Breast epithelium (tissue), 4 donors: ENCODE measurements at regions of chr17 and their contacts with region 1.

Region 1: DNA sequence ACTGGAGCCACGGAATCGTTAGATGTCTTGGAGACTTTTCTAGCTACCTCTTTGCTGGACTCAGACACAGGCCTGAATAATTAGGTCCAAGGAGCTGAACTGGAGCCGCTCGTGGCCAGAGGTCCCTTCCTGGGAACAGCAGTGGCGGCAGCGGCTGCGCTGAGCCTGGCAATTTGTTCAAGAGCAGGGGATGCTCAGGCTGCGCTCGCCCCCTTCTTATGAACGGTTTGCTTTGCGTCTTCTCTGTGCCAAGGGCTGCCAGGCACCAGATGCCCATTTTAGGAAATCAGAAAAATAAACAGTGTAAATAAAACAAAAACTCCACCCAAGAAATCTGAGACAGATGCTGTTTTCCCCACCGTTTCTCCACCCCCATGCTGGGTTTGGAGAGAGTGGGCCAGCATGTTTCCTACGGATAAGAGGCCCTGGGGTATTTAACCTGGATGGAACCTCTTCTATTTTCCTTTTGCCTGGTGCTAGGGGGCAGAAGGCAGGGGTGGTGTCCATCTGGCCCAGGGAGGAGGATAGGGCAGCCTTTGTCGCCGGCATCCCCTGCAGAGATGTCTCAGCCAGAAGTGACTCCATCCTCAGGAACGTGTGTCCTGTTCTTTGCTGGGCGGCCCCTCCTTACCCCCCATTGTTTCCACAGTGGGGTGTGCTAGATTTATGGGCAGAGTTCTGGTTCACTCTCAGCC is 163.4 kb downstream of the SEC14L1 start:
- DNase-seq: no peak
- H3K4me3 ChIP-seq: no peak overlapping the region
- H3K27ac ChIP-seq: no peak overlapping the region
- H3K4me1 ChIP-seq: peaks cover 7 to 15% of the 10 kb centered on the region in 2 donors
- H3K27me3 ChIP-seq: no peaks in the 10 kb centered on the region
- CTCF ChIP-seq: no peak
- POLR2A ChIP-seq: no peak

Region 2: DNA sequence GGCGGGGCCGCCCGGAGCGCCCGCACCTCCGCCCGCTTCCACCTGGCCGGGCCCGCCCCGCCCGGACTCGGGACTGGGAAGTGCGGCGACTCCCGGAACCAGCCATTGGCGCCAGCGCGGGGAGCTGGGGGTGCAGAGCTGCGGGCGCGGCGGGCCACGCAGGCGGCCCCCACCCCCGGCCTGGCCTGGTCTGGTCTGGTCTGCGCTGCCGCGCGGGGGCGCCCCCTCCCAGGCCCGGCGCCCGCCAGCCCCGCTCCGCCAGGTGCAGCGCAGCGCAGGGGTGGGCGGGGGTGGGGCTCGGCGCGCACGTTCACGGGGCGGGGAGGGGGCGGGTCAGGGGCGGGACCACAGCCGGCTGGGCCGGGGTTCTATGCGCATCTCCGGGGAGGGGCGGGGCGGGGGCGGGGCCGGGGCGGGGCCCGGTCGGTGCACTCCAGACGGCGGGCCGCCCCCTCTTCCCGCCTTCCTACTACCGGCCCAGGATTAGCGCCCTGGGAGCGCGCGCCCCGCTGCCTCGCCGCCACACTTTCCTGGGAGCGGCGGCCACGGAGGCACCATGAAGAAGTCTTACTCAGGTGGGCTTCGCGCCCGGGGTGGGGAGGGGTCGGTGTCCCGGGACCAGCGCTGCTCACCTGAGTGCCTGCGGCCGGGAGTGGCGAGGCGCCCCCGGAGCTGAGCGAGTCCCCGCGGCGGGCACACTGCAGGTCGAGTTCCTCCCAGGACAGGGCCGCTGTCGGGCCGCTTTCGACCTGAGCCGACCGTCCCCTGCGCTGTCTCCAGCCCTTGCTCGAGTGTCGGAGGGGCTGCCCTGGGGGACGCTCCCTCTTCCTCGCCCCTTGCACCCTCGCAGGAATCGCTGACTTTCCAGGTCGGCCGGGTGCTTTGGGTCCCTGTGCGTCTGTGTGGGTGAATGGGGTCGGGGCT is 23.0 kb before region 1 on chr17:
- intact Hi-C with region 1: loop called (anchors 1 kb)
- DNase-seq: peak; percentile 53 to 63
- H3K4me3 ChIP-seq: peak overlapping the region; percentile 31 to 70 (median 63)
- H3K27ac ChIP-seq: peak overlapping the region; percentile 74 to 97
- H3K4me1 ChIP-seq: peaks cover 4 to 12% of the 10 kb centered on the region in 2 donors
- H3K27me3 ChIP-seq: no peaks in the 10 kb centered on the region
- CTCF ChIP-seq: no peak
- POLR2A ChIP-seq: no peak

Region 3: GRCh38 chr17:78337244-78338109 is 1033.3 kb after region 1 on chr17:
- intact Hi-C with region 1: no loop called
- DNase-seq: no peak
- H3K4me3 ChIP-seq: no peak overlapping the region
- H3K27ac ChIP-seq: peak overlapping the region in 1 of 2 donors; percentile 35
- H3K4me1 ChIP-seq: peaks cover 4 to 5% of the 10 kb centered on the region in 2 donors
- H3K27me3 ChIP-seq: no peaks in the 10 kb centered on the region
- CTCF ChIP-seq: no peak
- POLR2A ChIP-seq: no peak